H1 (cell line): ENCODE measurements at regions of chr2 and their contacts with region 1.

Region 1: DNA sequence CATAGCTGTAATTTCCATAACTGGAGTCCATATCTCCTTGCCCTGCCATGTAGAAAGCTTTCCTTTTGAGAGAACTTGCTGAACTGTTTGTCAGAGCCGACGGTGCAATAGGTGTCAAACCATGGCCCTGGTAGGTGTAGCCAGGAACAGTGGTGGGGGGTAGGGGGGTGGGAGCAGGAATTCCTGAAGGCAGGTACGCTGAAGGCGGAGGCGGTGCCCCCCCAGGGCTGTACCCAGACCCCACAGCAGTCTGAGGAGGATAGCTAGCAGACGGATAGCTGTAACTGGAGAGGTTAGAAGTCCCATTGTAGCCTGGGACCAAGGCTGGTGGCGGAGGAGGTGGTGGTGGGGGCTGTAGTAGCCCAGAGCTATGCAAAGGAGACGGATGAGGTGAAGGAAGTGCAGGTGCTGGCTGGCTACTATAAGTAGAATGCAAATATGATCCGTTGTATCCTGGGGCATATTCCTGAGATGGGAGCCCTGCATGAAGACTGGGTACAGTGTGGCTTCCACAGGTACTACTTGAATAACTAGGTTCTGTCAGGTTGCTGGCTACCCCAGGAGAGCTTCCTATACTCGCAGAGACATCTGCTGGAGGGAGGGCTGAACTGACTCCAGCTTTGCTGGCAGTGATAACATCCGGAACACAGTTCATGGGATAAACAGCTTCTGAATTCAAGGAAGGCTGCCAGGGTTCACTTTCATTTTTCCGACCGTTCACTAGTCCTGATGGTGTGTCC is 124.8 kb downstream of the FIGN start:
- DNase-seq: peak in 1 of 2 experiments; percentile 56
- H3K4me3 ChIP-seq: no peak overlapping the region
- H3K27ac ChIP-seq: no peak overlapping the region
- H3K4me1 ChIP-seq: peaks cover 0 to 3% (median 2%) of the 10 kb centered on the region in 4 experiments; a peak in 2 of 7 replicates
- H3K27me3 ChIP-seq: no peaks in the 10 kb centered on the region
- CTCF ChIP-seq: peak; percentile 48 to 71 (median 56)
- EP300 ChIP-seq: no peak
- POLR2A ChIP-seq: no peak
- RAD21 ChIP-seq: peak; percentile 67 to 72

Region 2: GRCh38 chr2:163345908-163346573 is 264.9 kb before region 1 on chr2:
- CTCF ChIA-PET with region 1: interaction called, 11 read pairs
- POLR2A ChIA-PET with region 1: no interaction called
- DNase-seq: no peak
- H3K4me3 ChIP-seq: no peak overlapping the region
- H3K27ac ChIP-seq: no peak overlapping the region
- H3K4me1 ChIP-seq: peaks cover 0 to 11% (median 4%) of the 10 kb centered on the region in 4 experiments; a peak in 4 of 7 replicates
- H3K27me3 ChIP-seq: no peaks in the 10 kb centered on the region
- CTCF ChIP-seq: peak in 2 of 3 experiments; percentile 39 to 51; a peak in 2 of 4 replicates
- EP300 ChIP-seq: no peak
- POLR2A ChIP-seq: no peak
- RAD21 ChIP-seq: peak; percentile 59 to 64

Region 3: GRCh38 chr2:163370168-163370886 is 240.7 kb before region 1 on chr2:
- CTCF ChIA-PET with region 1: no interaction called
- POLR2A ChIA-PET with region 1: no interaction called
- DNase-seq: no peak
- H3K4me3 ChIP-seq: no peak overlapping the region
- H3K27ac ChIP-seq: no peak overlapping the region
- H3K4me1 ChIP-seq: no peaks in the 10 kb centered on the region; a peak in 1 of 7 replicates
- H3K27me3 ChIP-seq: no peaks in the 10 kb centered on the region
- CTCF ChIP-seq: no peak
- EP300 ChIP-seq: no peak
- POLR2A ChIP-seq: no peak
- RAD21 ChIP-seq: no peak

Region 4: GRCh38 chr2:163595028-163595427 is 16.0 kb before region 1 on chr2:
- CTCF ChIA-PET with region 1: interaction called, 19 read pairs
- POLR2A ChIA-PET with region 1: no interaction called
- DNase-seq: no peak
- H3K4me3 ChIP-seq: no peak overlapping the region
- H3K27ac ChIP-seq: no peak overlapping the region
- H3K4me1 ChIP-seq: peaks cover 0 to 11% (median 10%) of the 10 kb centered on the region in 4 experiments; a peak in 4 of 7 replicates
- H3K27me3 ChIP-seq: no peaks in the 10 kb centered on the region
- CTCF ChIP-seq: no peak
- EP300 ChIP-seq: no peak
- POLR2A ChIP-seq: no peak
- RAD21 ChIP-seq: no peak